ENCODE measurements at regions of chr3 and their contacts with region 1.

Region 1: GRCh38 chr3:9932843-9933560 is 632 bp upstream of the CRELD1 start:
- DNase-seq: peak; percentile 85
- ATAC-seq: peak; percentile 76
- H3K4me3 Mint-ChIP-seq: peak overlapping the region; percentile 92
- H3K27ac Mint-ChIP-seq: peak overlapping the region; percentile 88
- H3K4me1 Mint-ChIP-seq: peaks cover 23% of the 10 kb centered on the region
- H3K27me3 Mint-ChIP-seq: no peaks in the 10 kb centered on the region

Region 2: GRCh38 chr3:9890249-9891071 is 42.5 kb before region 1 on chr3 and contains the start of gene JAGN1:
- POLR2A ChIA-PET with region 1: interaction called, 31 read pairs
- DNase-seq: peak; percentile 90
- ATAC-seq: peak; percentile 86
- H3K4me3 Mint-ChIP-seq: peak within 1 kb of the TSS; percentile 97
- H3K27ac Mint-ChIP-seq: peak within 1 kb of the TSS; percentile 99
- H3K4me1 Mint-ChIP-seq: peaks cover 35% of the 10 kb centered on the region
- H3K27me3 Mint-ChIP-seq: no peaks in the 10 kb centered on the region
- total RNA-seq, gene JAGN1: 31.5 to 34.2 TPM

Region 3: GRCh38 chr3:9915254-9916141 is 17.5 kb before region 1 on chr3:
- POLR2A ChIA-PET with region 1: interaction called, 16 read pairs
- DNase-seq: peak; percentile 60
- ATAC-seq: peak; percentile 60
- H3K4me3 Mint-ChIP-seq: peak overlapping the region; percentile 74
- H3K27ac Mint-ChIP-seq: peak overlapping the region; percentile 56
- H3K4me1 Mint-ChIP-seq: peaks cover 13% of the 10 kb centered on the region
- H3K27me3 Mint-ChIP-seq: peaks cover 13% of the 10 kb centered on the region

Region 4: DNA sequence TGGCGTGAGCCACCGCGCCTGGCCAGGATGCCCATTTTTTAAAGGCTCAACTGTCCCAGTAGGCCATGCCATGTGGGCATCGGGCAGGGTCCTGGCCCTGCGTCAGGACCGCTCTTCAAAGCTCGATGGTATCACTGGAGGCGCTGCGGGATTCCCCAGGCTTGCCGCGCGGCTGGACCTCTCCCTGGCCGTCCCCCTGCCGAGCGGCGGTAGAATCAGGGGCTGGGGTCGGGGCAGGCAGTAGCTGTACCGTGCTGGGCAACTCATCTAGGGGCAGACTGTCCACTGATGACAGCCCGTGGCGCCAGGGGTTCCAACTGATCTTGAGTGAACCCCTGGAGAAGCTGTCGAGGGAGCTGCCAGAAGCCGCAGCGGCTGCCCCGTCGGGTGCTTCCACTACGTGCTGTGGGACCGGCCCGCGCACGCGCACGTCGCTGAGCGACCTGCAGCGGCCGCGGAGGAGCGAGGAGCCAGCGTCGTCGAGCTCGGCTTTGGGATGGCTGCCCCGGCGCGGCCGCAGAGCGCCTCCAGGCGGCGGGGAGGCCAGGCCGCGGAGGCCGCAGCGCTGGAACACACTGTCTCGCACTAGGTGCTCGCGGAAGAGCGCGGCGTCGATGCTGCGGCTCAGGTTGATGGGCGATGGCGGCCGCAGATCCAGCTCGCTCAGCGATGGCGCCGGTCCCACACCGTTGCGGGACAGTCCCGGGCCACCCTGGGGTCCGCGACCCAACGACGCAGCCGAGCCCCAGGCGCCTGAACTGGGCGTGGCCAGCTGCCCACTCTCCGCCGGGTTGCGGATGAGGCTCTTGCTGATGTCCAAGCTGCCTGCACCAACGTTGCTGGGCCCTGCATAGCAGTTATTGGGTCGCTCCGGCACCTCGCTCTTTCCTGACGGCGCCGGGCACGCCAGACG is 13.4 kb after region 1 on chr3:
- POLR2A ChIA-PET with region 1: interaction called, 10 read pairs
- DNase-seq: peak; percentile 85
- ATAC-seq: peak; percentile 87
- H3K4me3 Mint-ChIP-seq: peak overlapping the region; percentile 72
- H3K27ac Mint-ChIP-seq: no peak overlapping the region
- H3K4me1 Mint-ChIP-seq: peaks cover 6% of the 10 kb centered on the region
- H3K27me3 Mint-ChIP-seq: no peaks in the 10 kb centered on the region

Region 5: DNA sequence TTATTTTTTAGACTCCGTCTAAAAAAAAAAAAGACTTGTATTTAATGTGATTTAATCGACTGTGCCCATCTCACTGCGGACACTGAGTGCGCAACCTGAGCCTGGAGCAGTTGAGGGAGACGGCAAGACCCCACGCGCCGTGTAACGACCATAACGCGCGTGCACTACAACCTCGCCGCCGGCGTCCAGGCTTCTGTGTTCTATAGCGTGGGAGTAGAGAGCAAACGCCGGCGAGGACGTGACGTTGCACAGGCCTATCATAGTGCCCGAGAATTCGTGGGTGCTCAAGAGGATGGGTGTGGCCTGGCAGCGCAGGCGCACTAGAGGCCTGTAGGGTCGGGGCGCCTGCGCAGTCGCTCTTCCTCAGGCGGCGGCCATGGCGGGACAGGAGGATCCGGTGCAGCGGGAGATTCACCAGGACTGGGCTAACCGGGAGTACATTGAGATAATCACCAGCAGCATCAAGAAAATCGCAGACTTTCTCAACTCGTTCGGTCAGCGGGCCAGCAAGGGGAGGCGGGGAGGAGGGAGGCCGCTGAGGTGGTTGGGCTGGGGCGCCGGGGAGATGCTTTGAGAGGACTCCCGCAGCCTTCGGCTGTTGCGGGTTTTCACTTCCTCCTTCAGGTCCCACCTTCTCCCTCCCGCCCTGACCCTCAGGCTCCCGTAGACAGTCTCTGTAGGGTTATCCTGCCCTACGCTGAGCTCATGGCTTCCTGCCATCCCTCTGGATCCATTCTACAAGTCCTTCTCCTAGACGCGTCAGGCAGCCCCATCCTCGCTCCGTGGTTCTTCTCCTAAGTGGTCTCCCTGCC is 182.5 kb after region 1 on chr3 and contains the start of gene BRK1:
- POLR2A ChIA-PET with region 1: no interaction called
- DNase-seq: peak; percentile 90
- ATAC-seq: peak; percentile 100
- H3K4me3 Mint-ChIP-seq: peak within 1 kb of the TSS; percentile 95
- H3K27ac Mint-ChIP-seq: peak within 1 kb of the TSS; percentile 94
- H3K4me1 Mint-ChIP-seq: peaks cover 25% of the 10 kb centered on the region
- H3K27me3 Mint-ChIP-seq: peaks cover 2% of the 10 kb centered on the region
- total RNA-seq, gene BRK1: 105 to 108 TPM

Region 6: DNA sequence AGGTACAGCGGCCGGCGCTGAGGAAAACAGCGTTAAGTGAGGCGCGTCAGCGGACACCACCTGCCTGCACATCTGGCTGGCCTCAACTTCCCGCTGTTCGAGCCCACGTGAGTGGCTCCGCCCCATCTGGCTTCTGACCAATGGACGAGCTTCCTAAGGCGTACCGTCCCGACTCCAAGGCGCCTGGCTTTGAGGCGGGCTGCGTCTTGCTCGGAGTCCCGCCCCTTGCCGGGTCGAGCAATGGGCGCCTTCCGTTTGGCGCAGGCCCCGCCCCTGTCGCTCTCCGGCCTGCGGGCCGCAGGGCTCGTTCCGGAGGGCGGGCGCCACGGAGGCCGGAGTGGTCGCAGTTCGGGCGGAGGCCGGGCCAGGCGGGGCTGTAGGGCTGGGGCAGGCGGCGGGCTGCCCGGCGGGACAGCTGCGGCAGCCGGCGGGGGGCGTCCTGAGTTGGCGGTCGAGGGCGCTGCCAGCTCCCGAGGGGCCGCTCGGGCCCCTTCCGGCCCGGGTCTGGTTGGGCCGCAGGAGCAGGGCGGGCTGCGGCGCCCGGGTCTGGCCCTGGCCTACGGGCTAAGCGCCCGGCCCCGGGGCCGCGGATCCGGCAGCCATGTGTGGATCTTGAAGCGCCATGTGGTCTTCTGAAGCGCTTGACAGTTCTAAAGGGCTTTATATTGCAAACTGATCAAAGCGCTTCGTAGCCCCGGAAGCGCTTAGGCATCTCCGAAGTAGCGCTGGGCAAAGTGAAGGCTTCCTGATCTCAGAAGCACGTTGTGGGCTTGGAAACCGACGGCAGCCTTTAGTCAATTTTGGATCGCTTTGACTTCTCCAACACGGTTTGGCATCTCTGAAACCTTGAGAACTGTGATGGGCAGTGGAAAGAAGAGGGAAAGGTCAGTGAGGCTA is 315.4 kb after region 1 on chr3 and contains the start of gene TATDN2:
- POLR2A ChIA-PET with region 1: interaction called, 10 read pairs
- DNase-seq: peak; percentile 92
- ATAC-seq: peak; percentile 94
- H3K4me3 Mint-ChIP-seq: peak within 1 kb of the TSS; percentile 95
- H3K27ac Mint-ChIP-seq: peak within 1 kb of the TSS; percentile 96
- H3K4me1 Mint-ChIP-seq: peaks cover 35% of the 10 kb centered on the region
- H3K27me3 Mint-ChIP-seq: no peaks in the 10 kb centered on the region
- total RNA-seq, gene TATDN2: 55.4 to 67.4 TPM

Region 7: DNA sequence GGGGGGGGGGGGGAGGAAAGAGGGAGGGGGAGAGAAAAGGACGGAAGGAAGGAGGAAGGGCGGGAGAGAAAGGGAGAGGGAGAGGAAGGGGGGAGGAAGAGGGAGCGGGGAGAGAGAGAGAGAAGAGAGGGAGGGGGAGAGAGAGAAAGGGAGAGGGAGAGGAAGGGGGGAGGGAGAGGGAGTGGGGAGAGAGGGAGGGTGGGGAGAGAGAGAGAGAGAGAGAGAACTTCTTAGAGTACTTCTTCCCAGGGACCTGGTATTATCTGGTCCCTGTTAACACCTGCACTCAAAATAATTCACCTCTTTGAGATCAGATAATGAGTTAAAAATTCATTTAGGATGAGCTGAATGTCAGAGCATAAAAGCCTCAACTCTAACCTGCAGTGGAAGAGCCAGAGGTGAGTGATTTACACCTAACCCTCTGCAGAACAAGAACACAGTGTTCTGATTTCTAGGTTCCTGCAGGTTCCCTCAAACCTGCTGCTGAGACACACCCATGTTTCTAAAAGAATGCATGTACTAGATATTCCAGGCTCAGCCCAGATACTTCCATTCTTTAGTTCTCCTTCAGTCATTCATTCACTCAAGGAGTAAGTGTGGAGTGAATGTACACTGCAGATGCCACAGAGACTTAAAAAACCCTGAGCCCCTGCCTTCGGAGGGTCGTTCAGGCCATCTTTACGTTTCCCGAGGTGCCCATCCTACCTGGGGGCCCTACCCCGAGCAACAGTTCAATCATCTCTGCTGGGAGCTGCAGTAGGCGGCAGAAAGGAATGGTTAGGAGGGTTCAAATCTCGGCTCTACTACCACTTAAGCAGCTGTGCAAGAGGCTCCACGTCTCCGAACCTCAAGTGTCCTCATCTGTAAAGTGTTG is 387.0 kb after region 1 on chr3:
- POLR2A ChIA-PET with region 1: interaction called, 10 read pairs
- DNase-seq: no peak
- ATAC-seq: no peak
- H3K4me3 Mint-ChIP-seq: peak overlapping the region; percentile 94
- H3K27ac Mint-ChIP-seq: peak overlapping the region; percentile 85
- H3K4me1 Mint-ChIP-seq: peaks cover 17% of the 10 kb centered on the region
- H3K27me3 Mint-ChIP-seq: peaks cover 3% of the 10 kb centered on the region